Posterior cingulate gyrus (tissue), 11 donors: ENCODE measurements at regions of chr9 and their contacts with region 1.

Region 1: GRCh38 chr9:126611592-126612325 is 2.0 kb upstream of the LMX1B start:
- DNase-seq: peak; percentile 34 to 93 (median 68)

Region 2: DNA sequence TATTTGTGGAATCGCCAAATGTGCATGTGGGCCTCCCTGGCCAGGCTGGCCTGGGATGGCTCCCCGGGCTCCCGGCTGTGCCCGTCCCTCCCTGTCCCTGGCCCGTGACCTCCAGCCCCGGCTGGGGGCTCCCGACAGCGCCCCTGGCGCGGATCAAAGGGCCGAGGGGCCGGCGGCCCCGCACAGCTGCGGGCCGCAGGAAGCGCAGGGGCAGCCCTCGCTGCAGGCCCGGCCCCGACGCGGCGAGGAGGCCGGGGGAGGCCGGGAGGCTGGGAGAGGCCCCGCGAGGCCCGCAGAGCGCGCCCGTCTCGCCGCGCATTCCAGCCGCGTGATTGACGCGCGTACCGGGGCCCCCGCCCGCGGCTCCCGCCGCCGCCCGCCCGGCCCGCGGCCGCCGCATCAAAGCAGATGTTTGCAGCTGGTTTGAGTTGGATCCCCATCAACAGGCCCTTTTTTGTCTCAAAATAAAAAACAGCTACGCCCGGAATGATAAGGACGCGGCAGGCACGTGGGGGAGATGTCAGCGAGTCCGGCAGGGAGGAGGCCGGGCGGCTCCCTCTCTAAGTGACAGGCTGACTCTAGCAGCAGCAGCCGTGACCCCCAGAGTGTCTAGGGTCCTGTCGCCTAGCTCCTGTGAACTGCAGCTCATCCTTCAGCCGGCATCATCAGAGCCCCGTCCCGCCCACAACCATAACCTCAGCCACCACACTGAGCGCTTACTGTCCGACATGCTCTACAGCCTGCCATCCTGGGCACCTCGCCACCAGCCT is 71.4 kb after region 1 on chr9:
- intact Hi-C with region 1: loop called (anchors 10 kb)
- DNase-seq: peak in 1 of 10 donors; percentile 76

Region 3: DNA sequence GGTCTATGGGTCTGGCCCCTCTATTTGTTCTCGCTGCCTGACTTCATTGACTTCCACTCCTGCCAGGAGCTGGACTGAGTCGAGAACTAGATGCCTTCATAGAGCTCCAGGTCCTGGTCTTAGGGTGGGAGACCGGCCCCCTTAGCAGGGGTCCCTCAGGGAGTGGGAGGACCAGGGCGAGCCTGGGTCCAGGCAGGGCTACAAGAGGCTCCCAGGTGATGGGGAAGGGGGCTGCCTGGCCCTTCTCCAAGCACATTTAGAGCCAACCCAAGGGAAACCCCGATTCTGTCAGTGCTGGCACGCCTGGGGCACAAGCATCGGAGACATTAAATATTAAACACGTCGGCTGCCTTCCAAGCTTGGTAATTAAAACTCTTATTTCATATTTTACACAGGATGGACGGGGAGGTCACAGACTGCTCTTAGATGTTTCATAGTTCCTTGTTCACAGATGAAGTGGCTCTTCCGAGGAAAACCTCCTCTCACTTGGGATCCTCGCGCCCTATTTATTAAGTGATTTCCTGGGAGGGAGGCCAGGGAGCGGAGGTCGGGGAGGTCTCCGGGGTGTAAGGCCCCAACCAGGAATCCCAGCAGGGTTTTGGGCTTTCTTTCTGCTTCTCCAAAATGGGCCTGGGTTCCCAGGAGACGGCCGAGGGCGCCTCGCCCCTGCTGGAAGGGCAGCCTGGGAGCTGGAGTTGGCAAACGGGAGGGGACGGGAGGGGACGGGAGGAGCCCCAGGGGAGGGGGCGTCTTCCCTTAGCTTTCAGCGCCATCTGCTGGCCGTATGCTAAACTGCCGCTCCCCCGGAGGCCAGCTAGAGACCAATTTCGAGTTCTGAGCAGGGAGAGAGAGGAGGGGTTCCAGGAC is 169.7 kb after region 1 on chr9:
- intact Hi-C with region 1: loop called (anchors 2 kb)
- DNase-seq: peak; percentile 71 to 97 (median 90)